ENCODE measurements at regions of chr16 and their contacts with region 1.

Region 1: GRCh38 chr16:14003074-14003570 is 68.0 kb upstream of the MRTFB start:
- DNase-seq: peak in 1 of 2 donors; percentile 74
- H3K4me3 ChIP-seq: peak overlapping the region; percentile 39 to 59
- H3K27ac ChIP-seq: peak overlapping the region; percentile 20 to 86
- H3K4me1 ChIP-seq: peaks cover 5 to 32% of the 10 kb centered on the region in 2 donors
- H3K27me3 ChIP-seq: no peaks in the 10 kb centered on the region
- CTCF ChIP-seq: peak in 2 of 3 experiments; percentile 32 to 46

Region 2: DNA sequence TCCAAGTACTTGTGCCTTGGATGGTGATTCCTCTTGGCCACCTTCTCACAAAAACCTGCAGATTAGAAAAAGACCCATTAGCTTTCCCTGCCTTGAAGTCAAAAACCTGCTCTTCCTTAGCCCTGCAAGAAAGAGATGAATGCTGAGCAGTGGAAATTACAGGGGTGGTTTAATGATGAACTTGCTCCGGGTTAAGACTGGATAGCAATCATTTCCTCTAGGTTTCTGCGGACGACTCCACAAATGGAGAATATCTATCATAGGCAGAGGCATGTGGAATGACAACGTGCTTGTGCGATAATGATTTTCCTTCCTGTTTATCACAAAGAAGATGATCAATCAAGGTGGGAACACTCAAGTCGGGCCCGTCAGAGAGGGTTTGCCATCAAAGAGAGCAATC is 284.4 kb before region 1 on chr16:
- intact Hi-C with region 1: no loop called
- DNase-seq: no peak
- H3K4me3 ChIP-seq: no peak overlapping the region
- H3K27ac ChIP-seq: no peak overlapping the region
- H3K4me1 ChIP-seq: no peaks in the 10 kb centered on the region
- H3K27me3 ChIP-seq: no peaks in the 10 kb centered on the region
- CTCF ChIP-seq: no peak

Region 3: GRCh38 chr16:13935408-13935807 is 67.7 kb before region 1 on chr16:
- intact Hi-C with region 1: no loop called
- DNase-seq: no peak
- H3K4me3 ChIP-seq: no peak overlapping the region
- H3K27ac ChIP-seq: no peak overlapping the region
- H3K4me1 ChIP-seq: peaks cover 0 to 4% of the 10 kb centered on the region in 2 donors
- H3K27me3 ChIP-seq: no peaks in the 10 kb centered on the region
- CTCF ChIP-seq: peak in 2 of 3 experiments; percentile 28 to 31

Region 4: DNA sequence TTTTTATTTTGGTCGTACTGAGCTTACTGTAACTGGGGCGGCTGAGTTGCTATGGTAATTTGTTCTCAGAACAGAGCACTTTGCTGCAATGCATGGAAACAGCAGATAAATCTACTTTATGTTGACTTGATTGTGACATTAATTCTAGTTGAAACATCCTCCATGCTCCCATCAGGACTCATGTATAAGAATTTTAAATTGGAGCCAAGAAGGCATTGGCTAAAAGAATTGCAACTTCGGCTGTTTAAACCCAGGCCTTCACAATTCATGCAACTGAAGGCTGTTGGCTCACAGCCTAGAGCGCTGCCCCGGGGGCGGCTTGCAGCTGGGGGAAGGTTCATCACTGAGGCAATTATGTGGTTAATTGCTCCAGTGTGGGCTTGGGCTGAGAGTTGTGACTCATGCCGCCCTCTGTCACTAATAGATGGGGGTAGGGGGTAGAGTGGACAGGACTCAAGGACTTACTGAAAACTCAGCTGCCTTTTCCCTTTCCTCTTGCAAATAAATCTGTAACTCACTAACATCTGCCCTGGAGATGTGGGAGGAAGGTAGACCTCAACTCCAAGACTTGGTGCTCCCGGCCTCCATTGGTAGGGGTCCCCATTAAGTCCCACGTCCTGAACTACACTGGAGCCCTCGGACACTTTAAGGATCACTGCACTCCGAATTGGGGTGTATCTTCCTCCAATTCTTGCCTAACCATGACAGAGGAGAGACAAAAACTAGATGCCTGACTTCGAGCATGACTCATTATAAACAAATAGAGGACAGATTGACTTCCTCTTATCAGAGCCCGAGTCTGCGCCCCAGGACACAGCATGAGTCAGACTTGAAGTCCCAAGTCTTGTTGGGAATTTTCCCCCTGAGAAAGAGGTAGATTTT is 45.7 kb before region 1 on chr16:
- intact Hi-C with region 1: no loop called
- DNase-seq: peak in 1 of 2 donors; percentile 83
- H3K4me3 ChIP-seq: peak overlapping the region; percentile 44 to 50
- H3K27ac ChIP-seq: peak overlapping the region; percentile 59 to 67
- H3K4me1 ChIP-seq: peaks cover 0 to 11% of the 10 kb centered on the region in 2 donors
- H3K27me3 ChIP-seq: no peaks in the 10 kb centered on the region
- CTCF ChIP-seq: no peak

Region 5: DNA sequence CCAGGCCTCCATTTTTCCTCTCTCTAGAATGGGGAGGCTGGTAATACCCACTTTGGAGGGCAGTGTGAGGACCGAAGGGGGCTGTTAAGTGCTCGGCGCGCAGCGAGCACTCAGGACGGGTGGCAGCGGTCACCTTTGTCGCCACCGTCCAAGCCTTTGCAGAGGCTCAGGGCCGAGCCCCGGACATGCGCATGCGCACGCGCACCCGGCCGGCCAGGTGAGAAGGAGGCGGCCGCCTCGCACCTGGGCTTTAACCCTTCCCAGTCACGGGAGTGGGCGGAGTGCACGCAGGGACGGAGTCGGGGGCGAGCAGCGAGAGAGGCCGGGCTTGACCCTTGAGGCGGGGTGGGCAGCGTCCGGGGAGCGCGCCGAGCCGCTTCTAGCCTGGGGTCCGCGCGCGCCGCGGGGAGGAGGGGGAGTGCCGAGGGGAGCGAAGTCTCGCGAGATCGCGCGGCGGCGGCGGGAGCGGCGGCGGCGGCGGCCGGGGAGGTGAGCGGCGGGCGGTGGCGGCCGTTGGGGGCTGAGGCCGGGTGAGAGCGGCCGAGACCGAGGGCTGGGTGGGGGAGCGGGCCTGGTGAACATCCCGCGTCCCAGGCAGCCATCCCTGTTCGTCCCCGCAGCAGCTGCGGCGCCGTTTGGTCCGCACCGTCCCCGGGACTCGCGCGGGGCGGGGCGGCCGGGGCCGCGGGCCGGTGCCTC is 67.9 kb after region 1 on chr16 and contains the start of gene MRTFB:
- intact Hi-C with region 1: loop called (anchors 2 kb)
- DNase-seq: peak in 1 of 2 donors; percentile 85
- H3K4me3 ChIP-seq: peak within 1 kb of the TSS; percentile 100
- H3K27ac ChIP-seq: peak within 1 kb of the TSS; percentile 57 to 74
- H3K4me1 ChIP-seq: peaks cover 0 to 13% of the 10 kb centered on the region in 2 donors
- H3K27me3 ChIP-seq: no peaks in the 10 kb centered on the region
- CTCF ChIP-seq: no peak
- total RNA-seq, gene MRTFB: 89.4 TPM

Region 6: GRCh38 chr16:14455576-14455975 is 452.5 kb after region 1 on chr16:
- intact Hi-C with region 1: no loop called
- DNase-seq: no peak
- H3K4me3 ChIP-seq: no peak overlapping the region
- H3K27ac ChIP-seq: no peak overlapping the region
- H3K4me1 ChIP-seq: no peaks in the 10 kb centered on the region
- H3K27me3 ChIP-seq: no peaks in the 10 kb centered on the region
- CTCF ChIP-seq: no peak

Measured in ascending aorta (tissue), 2 donors.